ENCODE measurements at regions of chr7 and their contacts with region 1.

Region 1: DNA sequence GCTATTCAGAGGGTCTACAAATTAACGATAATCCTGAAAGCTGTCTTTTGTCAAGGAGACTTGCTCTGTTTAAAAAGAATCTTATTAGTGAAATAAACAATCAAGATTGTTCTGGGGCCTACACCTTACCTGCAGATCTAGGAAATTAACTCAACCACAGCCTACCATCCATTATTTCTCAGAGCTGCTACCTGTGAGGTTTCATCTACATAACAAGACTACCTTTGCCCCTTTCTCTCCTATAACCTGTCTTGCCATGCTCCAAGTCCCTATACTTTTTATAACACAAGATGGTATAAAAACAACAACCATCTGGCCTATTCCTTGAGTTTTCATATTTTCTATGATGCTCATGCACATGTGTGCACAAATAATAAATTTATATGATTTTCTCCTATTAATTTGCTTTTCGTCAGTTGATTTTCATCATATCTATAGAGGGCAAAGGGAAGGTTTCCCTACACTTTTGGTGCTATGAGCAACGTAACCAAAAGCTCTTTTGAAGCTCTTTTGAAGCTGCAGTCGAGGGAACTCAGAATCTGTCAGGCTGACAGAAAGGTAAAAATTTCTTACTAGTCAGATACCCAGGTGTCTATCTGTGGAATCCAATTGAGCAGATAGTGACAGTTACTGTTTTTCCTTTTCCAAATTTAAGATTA is 138.1 kb downstream of the CACNA2D1 start:
- DNase-seq: no peak
- H3K4me3 ChIP-seq: no peak overlapping the region
- H3K27ac ChIP-seq: no peak overlapping the region
- H3K4me1 ChIP-seq: no peaks in the 10 kb centered on the region
- H3K27me3 ChIP-seq: no peaks in the 10 kb centered on the region
- CTCF ChIP-seq: no peak
- POLR2A ChIP-seq: no peak

Region 2: DNA sequence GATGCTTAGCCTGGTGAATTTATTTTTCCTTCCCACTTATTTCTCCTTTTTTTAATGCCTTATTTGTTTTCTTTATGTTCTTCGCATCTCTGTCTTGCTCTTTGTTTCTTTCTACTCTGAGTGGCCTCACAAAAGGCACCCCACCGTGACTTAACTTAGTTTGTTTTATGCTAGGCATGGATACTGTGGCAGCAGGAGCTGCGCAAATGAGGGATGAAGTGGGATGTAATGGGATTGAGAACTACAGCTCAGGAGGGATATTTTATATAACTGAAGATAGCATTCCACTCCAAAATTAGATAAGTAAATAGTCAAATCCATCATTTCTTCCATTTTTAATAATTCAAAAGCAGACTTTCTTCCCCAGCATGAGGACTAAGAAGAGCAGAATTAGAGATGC is 139.8 kb after region 1 on chr7:
- intact Hi-C with region 1: loop called (anchors 5 kb)
- DNase-seq: no peak
- H3K4me3 ChIP-seq: no peak overlapping the region
- H3K27ac ChIP-seq: no peak overlapping the region
- H3K4me1 ChIP-seq: peaks cover 4 to 7% of the 10 kb centered on the region in 2 donors
- H3K27me3 ChIP-seq: no peaks in the 10 kb centered on the region
- CTCF ChIP-seq: no peak
- POLR2A ChIP-seq: no peak